Spleen (tissue), 13 donors: ENCODE measurements at regions of chr2 and their contacts with region 1.

Region 1: DNA sequence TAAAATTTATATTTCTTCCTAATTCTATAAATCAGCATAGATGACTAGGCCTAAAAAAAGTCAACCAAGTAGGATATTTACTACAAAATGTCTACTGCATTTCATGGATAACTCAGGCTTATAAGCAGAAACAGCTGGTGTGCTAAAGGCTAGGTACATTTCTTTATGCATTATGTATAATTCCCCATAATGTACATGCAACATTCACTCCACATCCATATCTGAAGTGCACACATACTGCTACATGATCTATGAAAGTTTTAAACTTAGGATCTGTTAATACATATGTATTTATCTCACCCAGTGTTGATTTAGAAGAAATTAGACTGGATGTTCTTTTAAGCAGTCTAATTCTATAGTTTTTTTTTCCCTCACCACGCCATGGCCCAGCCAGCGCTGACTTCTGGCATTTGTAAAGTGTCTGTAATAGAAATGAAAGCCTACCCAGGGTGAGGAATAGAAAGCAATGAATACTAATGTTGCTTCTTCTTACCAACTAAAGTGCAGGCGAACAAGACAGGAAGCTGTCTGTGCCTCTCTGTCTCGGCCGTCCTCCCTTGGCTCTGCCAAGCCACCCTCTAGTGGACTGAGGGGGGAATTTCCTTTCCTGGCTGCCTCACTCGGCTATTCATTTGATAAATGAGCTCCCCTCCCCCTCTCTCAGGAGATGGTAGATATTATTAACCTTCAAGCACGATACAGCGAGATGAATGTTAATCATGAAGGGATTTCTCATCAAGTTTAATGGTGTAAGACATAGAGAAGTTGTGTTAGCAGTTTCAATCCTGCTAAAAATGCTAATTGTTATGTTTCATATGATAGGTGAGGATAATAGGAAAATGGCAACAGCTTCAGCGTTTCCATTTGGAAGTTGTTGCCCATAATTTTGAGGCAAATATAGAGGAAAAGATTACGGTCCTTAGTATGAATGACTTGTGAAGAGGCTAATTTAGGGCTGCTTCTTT is 384.5 kb downstream of the MTX2 start:
- DNase-seq: peak; percentile 78
- H3K4me3 ChIP-seq: no peak overlapping the region
- H3K27ac ChIP-seq: peak overlapping the region in 5 of 8 donors; percentile 13 to 50 (median 19)
- H3K4me1 ChIP-seq: peaks cover 0 to 22% (median 14%) of the 10 kb centered on the region in 6 donors
- H3K27me3 ChIP-seq: peaks cover 0 to 25% (median 0%) of the 10 kb centered on the region in 7 donors
- CTCF ChIP-seq: peak; percentile 29 to 78 (median 69)
- POLR2A ChIP-seq: no peak

Region 2: GRCh38 chr2:176821345-176821744 is 167.6 kb after region 1 on chr2:
- intact Hi-C with region 1: loop called (anchors 10 kb)
- DNase-seq: no peak
- H3K4me3 ChIP-seq: no peak overlapping the region
- H3K27ac ChIP-seq: no peak overlapping the region
- H3K4me1 ChIP-seq: no peaks in the 10 kb centered on the region
- H3K27me3 ChIP-seq: no peaks in the 10 kb centered on the region
- CTCF ChIP-seq: no peak
- POLR2A ChIP-seq: no peak